ENCODE measurements at regions of chr10 and their contacts with region 1.

Region 1: DNA sequence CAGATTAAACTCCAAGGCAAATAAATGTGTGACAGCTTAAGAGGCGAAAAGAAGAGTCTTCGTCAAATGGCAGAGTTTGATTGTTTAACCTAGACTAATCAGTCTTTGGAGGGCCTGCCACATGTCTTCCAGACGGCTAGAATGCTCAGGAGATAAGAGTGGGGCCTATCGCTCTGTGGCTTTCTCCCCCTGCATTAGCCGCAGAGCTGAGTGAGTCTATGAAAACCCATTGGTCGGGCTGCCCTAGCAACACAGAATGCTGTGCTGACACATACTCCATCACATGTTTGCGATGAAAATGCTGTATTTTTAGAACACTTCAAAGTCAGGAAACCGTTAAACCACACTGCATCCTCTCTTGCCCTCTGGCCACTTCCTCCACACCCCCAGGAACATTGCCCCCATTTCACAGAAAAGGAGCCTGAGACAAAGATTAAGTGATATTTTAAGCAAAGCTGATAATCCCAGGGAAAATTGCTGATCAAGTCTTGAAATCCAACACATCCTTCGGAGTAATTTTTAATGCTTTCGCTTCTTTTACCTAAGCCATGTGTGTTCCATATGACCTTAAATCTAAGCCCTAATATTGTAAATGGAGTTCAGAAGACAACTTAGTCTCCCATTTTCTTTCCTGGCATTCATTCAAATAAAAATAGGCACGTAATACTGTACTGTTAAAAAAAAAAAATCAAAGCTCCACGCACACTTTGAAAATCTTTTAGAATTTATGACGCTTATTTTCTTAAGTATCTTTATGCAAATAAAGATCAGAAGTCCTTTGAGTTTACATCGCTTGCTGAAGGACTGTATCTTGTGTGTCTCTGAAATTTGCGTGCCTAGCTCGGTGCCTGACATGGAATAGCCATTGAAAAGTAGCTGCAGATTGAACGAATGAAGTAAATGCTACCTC is 161.2 kb downstream of the CELF2 start:
- DNase-seq: peak; percentile 79 to 94
- ATAC-seq: peak; percentile 63 to 90 (median 86)
- H3K4me3 ChIP-seq: peak overlapping the region; percentile 16
- H3K4me3 Mint-ChIP-seq: no peak overlapping the region
- H3K27ac ChIP-seq: peak overlapping the region; percentile 86
- H3K27ac Mint-ChIP-seq: no peak overlapping the region
- H3K4me1 ChIP-seq: peaks cover 86% of the 10 kb centered on the region
- H3K4me1 Mint-ChIP-seq: peaks cover 31 to 100% of the 10 kb centered on the region in 2 donors
- H3K27me3 ChIP-seq: no peaks in the 10 kb centered on the region
- H3K27me3 Mint-ChIP-seq: no peaks in the 10 kb centered on the region
- CTCF ChIP-seq: no peak

Region 2: DNA sequence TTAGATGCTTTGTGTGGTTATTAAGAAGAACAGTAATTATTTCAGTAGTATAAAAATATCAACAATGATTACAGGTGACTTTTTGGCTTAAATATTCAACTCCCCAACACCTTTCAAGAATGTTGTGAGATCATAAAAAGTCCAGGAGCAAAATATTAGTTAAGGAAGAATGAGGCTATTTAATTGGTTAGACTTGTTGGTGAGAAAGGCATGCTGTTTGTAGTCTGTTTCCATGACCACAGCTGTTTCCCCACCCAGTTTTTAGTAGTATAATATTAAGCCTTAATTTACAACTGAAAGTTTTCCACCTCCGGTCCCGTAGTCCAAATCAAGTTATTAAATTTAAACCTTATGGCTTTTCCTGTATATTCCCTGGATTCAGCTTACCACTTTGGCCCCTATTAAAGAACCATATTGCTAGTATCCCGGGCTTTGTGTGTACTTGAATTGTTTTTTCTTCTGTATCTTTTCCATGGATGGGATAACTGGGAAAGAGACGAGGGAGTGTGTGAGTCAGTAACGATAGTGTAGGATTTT is 27.9 kb before region 1 on chr10:
- intact Hi-C with region 1: loop called (anchors 1 kb)
- DNase-seq: peak in 1 of 2 donors; percentile 73
- ATAC-seq: peak in 2 of 3 donors; percentile 16 to 51
- H3K4me3 ChIP-seq: no peak overlapping the region
- H3K4me3 Mint-ChIP-seq: peak overlapping the region; percentile 84
- H3K27ac ChIP-seq: peak overlapping the region; percentile 74
- H3K27ac Mint-ChIP-seq: peak overlapping the region; percentile 92 to 94
- H3K4me1 ChIP-seq: peaks cover 64% of the 10 kb centered on the region
- H3K4me1 Mint-ChIP-seq: peaks cover 74 to 80% of the 10 kb centered on the region in 2 donors
- H3K27me3 ChIP-seq: no peaks in the 10 kb centered on the region
- H3K27me3 Mint-ChIP-seq: no peaks in the 10 kb centered on the region
- CTCF ChIP-seq: no peak

Region 3: DNA sequence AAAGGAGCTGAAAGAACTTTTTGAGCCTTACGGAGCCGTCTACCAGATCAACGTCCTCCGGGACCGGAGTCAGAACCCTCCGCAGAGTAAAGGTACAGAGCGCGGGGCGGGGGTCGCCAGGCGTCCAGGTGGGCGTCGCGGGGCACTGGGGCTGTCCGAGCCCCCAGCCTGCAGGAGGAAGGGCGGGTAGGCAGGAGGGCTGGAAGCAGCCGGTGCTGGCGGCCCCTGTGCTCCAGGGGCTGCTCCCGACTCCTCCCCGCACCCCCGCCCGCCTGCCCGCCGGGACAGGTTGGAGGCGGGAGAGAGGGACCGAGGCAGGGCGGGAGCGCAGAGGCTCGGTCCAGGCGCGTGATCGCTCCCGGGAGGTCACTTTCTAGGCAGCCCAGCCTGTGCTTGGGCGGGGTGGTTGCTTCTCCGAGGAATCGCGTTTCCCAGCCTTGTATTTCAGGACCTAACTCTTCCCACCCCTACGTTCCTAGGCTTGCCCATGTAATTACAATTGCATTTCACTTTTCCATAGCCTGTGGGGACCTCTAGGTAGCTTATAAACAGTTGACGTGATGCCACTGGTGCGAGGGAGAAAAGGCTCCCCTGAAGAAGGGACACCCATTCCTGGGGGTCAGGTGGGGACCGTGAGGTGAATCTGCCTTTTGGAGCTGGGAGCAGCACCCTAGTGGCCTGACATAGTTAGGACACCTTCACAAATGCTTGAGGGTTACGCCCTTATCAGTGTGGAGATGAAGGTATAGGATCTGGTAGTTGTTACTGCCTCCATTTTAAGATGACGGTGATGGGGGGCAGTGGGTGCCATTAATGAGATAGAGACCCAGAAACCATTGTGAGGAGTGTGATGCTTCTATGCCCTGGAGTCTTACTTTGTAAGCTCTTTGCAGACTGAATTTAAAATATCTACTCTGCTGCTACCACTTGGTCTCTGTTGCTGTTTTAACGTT is 13.0 kb before region 1 on chr10:
- intact Hi-C with region 1: loop called (anchors 1 kb)
- DNase-seq: peak; percentile 53 to 90
- ATAC-seq: peak; percentile 52 to 68 (median 54)
- H3K4me3 ChIP-seq: peak overlapping the region; percentile 93
- H3K4me3 Mint-ChIP-seq: no peak overlapping the region
- H3K27ac ChIP-seq: peak overlapping the region; percentile 86
- H3K27ac Mint-ChIP-seq: no peak overlapping the region
- H3K4me1 ChIP-seq: peaks cover 54% of the 10 kb centered on the region
- H3K4me1 Mint-ChIP-seq: peaks cover 45 to 47% of the 10 kb centered on the region in 2 donors
- H3K27me3 ChIP-seq: no peaks in the 10 kb centered on the region
- H3K27me3 Mint-ChIP-seq: no peaks in the 10 kb centered on the region
- CTCF ChIP-seq: peak; percentile 71

Region 4: GRCh38 chr10:11197266-11197712 is 18.4 kb after region 1 on chr10:
- intact Hi-C with region 1: loop called (anchors 1 kb)
- DNase-seq: peak in 1 of 2 donors; percentile 33
- ATAC-seq: peak; percentile 39 to 61 (median 59)
- H3K4me3 ChIP-seq: no peak overlapping the region
- H3K4me3 Mint-ChIP-seq: peak overlapping the region; percentile 77
- H3K27ac ChIP-seq: peak overlapping the region; percentile 37
- H3K27ac Mint-ChIP-seq: no peak overlapping the region
- H3K4me1 ChIP-seq: peaks cover 76% of the 10 kb centered on the region
- H3K4me1 Mint-ChIP-seq: peaks cover 95 to 97% of the 10 kb centered on the region in 2 donors
- H3K27me3 ChIP-seq: no peaks in the 10 kb centered on the region
- H3K27me3 Mint-ChIP-seq: no peaks in the 10 kb centered on the region
- CTCF ChIP-seq: no peak

Region 5: GRCh38 chr10:11209830-11210181 is 30.9 kb after region 1 on chr10:
- intact Hi-C with region 1: loop called (anchors 2 kb)
- DNase-seq: peak in 1 of 2 donors; percentile 64
- ATAC-seq: no peak
- H3K4me3 ChIP-seq: no peak overlapping the region
- H3K4me3 Mint-ChIP-seq: peak overlapping the region; percentile 76
- H3K27ac ChIP-seq: peak overlapping the region; percentile 63
- H3K27ac Mint-ChIP-seq: no peak overlapping the region
- H3K4me1 ChIP-seq: peaks cover 82% of the 10 kb centered on the region
- H3K4me1 Mint-ChIP-seq: peaks cover 98 to 100% of the 10 kb centered on the region in 2 donors
- H3K27me3 ChIP-seq: no peaks in the 10 kb centered on the region
- H3K27me3 Mint-ChIP-seq: no peaks in the 10 kb centered on the region
- CTCF ChIP-seq: no peak

Region 6: DNA sequence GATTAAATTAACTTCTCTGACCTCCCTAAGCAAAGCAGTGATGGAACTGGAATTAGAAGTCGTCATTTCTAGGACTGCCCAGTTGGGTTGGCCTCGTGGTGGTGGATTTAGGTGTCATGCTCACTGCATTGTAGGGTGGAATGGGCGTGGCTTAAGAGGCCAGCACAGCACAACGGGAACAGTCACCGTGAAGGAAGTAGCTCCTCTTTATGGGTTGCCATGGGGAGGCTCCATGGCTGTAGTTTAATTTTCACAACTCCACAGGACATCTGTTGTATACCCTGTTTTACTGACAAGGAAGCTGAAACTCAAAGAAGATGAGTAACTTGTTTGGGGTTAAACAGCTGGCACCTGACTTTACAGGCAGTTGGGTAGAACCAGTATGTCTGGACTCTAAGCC is 47.1 kb after region 1 on chr10:
- intact Hi-C with region 1: loop called (anchors 5 kb)
- DNase-seq: peak; percentile 60 to 82
- ATAC-seq: peak; percentile 64 to 76 (median 67)
- H3K4me3 ChIP-seq: no peak overlapping the region
- H3K4me3 Mint-ChIP-seq: peak overlapping the region; percentile 63
- H3K27ac ChIP-seq: peak overlapping the region; percentile 76
- H3K27ac Mint-ChIP-seq: no peak overlapping the region
- H3K4me1 ChIP-seq: peaks cover 76% of the 10 kb centered on the region
- H3K4me1 Mint-ChIP-seq: peaks cover 97 to 99% of the 10 kb centered on the region in 2 donors
- H3K27me3 ChIP-seq: no peaks in the 10 kb centered on the region
- H3K27me3 Mint-ChIP-seq: no peaks in the 10 kb centered on the region
- CTCF ChIP-seq: no peak

Region 7: GRCh38 chr10:11236234-11236633 is 57.4 kb after region 1 on chr10:
- intact Hi-C with region 1: loop called (anchors 2 kb)
- DNase-seq: peak in 1 of 2 donors; percentile 70
- ATAC-seq: peak in 2 of 3 donors; percentile 10 to 20
- H3K4me3 ChIP-seq: no peak overlapping the region
- H3K4me3 Mint-ChIP-seq: peak overlapping the region; percentile 71
- H3K27ac ChIP-seq: peak overlapping the region; percentile 80
- H3K27ac Mint-ChIP-seq: no peak overlapping the region
- H3K4me1 ChIP-seq: peaks cover 58% of the 10 kb centered on the region
- H3K4me1 Mint-ChIP-seq: peaks cover 67 to 89% of the 10 kb centered on the region in 2 donors
- H3K27me3 ChIP-seq: no peaks in the 10 kb centered on the region
- H3K27me3 Mint-ChIP-seq: no peaks in the 10 kb centered on the region
- CTCF ChIP-seq: no peak

Measured in natural killer cell (primary cell).